ENCODE measurements at regions of chr17 and their contacts with region 1.

Region 1: GRCh38 chr17:57552114-57552624 is 192.9 kb downstream of the CCDC182 start:
- DNase-seq: peak; percentile 94
- H3K4me3 ChIP-seq: peak overlapping the region; percentile 62
- H3K27ac ChIP-seq: peak overlapping the region; percentile 99
- H3K4me1 ChIP-seq: peaks cover 93% of the 10 kb centered on the region
- CTCF ChIP-seq: peak; percentile 90

Region 2: GRCh38 chr17:57357399-57357807 is 194.8 kb before region 1 on chr17:
- CTCF ChIA-PET with region 1: interaction called, 5 read pairs
- POLR2A ChIA-PET with region 1: interaction called, 38 read pairs
- intact Hi-C with region 1: loop called (anchors 1 kb)
- DNase-seq: peak; percentile 74
- H3K4me3 ChIP-seq: peak overlapping the region; percentile 62
- H3K27ac ChIP-seq: peak overlapping the region; percentile 100
- H3K4me1 ChIP-seq: peaks cover 98% of the 10 kb centered on the region
- CTCF ChIP-seq: no peak

Region 3: GRCh38 chr17:57507828-57508227 is 44.3 kb before region 1 on chr17:
- CTCF ChIA-PET with region 1: no interaction called
- POLR2A ChIA-PET with region 1: no interaction called
- intact Hi-C with region 1: no loop called
- DNase-seq: no peak
- H3K4me3 ChIP-seq: no peak overlapping the region
- H3K27ac ChIP-seq: no peak overlapping the region
- H3K4me1 ChIP-seq: peaks cover 14% of the 10 kb centered on the region
- CTCF ChIP-seq: no peak

Region 4: GRCh38 chr17:57541472-57542394 is 10.4 kb before region 1 on chr17:
- CTCF ChIA-PET with region 1: no interaction called
- POLR2A ChIA-PET with region 1: interaction called, 11 read pairs
- intact Hi-C with region 1: no loop called
- DNase-seq: no peak
- H3K4me3 ChIP-seq: no peak overlapping the region
- H3K27ac ChIP-seq: no peak overlapping the region
- H3K4me1 ChIP-seq: peaks cover 66% of the 10 kb centered on the region
- CTCF ChIP-seq: peak; percentile 51

Region 5: DNA sequence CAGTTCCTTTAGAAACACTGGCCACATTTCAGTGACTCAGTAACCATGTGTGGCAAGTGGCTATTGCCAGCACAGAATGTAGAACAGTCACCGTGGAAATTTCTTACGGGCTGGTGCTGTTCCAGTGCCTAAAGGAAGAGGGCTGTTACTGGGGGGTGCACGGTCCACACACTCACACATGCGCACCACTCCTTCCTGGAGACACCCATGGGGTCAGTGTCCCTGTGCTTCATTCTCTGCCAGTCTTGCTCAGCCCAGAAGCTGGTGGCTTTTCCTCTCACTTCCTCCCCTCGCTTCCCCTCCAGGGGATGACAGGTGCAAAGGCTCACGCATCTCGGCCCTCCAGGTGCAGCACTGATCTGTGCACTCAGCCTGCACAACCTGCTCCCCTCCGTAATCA is 77.3 kb after region 1 on chr17:
- CTCF ChIA-PET with region 1: no interaction called
- POLR2A ChIA-PET with region 1: interaction called, 18 read pairs
- intact Hi-C with region 1: loop called (anchors 1 kb)
- DNase-seq: peak; percentile 94
- H3K4me3 ChIP-seq: peak overlapping the region; percentile 20
- H3K27ac ChIP-seq: peak overlapping the region; percentile 83
- H3K4me1 ChIP-seq: peaks cover 56% of the 10 kb centered on the region
- CTCF ChIP-seq: no peak

Region 6: DNA sequence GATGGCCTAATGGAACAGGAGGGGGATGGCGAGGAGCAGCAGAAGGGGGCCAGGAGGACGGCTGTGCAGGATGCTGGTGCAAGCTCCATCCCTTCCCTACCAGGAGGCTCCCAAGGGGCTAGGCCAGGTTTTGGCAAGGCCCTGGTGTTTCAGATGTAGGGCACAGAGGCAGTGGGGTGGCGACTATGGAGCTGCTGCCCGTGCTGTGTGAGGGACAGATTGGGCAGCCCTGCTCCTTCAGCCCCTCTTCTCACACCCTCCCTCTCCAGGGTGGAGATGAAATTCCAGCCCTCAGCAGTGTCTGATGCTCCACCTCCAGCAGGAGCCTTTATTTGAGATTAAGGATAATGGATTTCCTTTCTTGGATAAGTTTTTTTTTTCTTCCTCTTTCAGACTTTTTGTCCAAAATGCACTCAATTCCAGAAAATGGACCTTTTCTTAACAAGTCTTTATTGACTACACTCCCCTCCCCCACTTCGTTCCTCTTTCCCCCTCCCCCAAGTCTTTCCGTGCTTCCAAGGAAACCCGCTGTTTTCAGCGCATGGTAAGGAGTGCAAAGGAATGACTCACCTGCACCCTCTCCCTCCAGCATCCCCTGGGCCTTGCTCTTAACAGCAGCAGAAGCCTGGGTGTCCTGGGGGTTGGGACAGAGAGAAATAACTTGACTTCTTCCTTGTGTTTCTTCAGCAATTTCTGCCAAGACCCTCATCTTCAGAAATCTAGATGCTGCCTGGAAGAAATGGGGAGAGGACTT is 97.7 kb after region 1 on chr17:
- CTCF ChIA-PET with region 1: no interaction called
- POLR2A ChIA-PET with region 1: no interaction called
- intact Hi-C with region 1: no loop called
- DNase-seq: no peak
- H3K4me3 ChIP-seq: no peak overlapping the region
- H3K27ac ChIP-seq: no peak overlapping the region
- H3K4me1 ChIP-seq: no peaks in the 10 kb centered on the region
- CTCF ChIP-seq: no peak

Region 7: DNA sequence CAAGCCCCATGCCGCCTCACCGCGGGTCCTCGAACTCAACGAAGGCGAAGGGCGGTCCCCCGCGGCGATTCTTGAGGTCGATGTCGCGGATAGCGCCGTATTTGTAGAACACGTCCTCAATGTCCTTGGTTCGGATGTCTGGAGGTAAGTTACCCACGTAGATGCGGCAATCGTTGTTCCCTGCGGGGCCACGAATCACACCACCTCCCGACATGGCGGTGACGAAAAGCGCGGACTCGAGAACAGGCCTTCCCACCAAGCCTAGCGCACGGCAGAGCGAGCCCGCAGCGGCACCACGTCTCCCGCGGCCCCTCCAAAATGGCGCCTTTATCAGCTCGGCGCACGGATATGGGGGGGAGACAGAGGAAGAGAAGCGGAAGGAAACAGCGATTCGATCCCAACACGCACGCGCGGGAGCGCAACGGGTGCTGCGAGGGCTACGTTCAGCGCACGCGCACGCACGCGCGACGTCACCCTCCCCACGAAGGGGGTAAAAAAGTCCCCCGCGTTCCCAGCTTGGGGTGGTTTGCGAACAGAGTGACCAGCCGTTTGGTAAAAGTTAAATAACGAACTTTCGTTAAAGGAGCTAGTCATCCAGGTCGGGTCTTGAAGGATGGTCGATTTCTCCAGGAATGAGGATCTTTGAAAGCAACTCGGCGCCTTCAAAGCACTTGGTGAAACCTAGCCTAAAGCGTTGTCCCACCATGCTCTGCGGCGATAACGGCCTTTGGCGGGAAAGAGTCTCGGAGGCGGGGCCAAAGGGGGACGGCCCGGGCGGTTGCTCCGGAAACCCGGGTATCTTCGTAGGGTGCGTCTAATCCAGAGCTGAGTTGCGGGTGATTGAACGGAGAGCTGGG is 455.0 kb after region 1 on chr17 and contains the start of gene SRSF1:
- CTCF ChIA-PET with region 1: no interaction called
- POLR2A ChIA-PET with region 1: no interaction called
- intact Hi-C with region 1: loop called (anchors 10 kb)
- DNase-seq: peak; percentile 99
- H3K4me3 ChIP-seq: peak within 1 kb of the TSS; percentile 96
- H3K27ac ChIP-seq: peak within 1 kb of the TSS; percentile 89
- H3K4me1 ChIP-seq: peaks cover 45% of the 10 kb centered on the region
- CTCF ChIP-seq: no peak
- total RNA-seq, gene SRSF1: 582 and 677 TPM in 2 replicates

Measured in OCI-LY7 (cell line).